IMR-90 (cell line): ENCODE measurements at regions of chr14 and their contacts with region 1.

Region 1: GRCh38 chr14:68248481-68249255 is 429.1 kb downstream of the RAD51B start:
- DNase-seq: peak; percentile 78
- ATAC-seq: peak; percentile 59
- H3K4me3 ChIP-seq: no peak overlapping the region
- H3K27ac ChIP-seq: peak overlapping the region; percentile 28; the same call in 1 of the 2 replicates
- H3K4me1 ChIP-seq: peaks cover 25% of the 10 kb centered on the region
- H3K27me3 ChIP-seq: no peaks in the 10 kb centered on the region
- CTCF ChIP-seq: peak; percentile 66
- POLR2A ChIP-seq: no peak
- RAD21 ChIP-seq: peak; percentile 89

Region 2: DNA sequence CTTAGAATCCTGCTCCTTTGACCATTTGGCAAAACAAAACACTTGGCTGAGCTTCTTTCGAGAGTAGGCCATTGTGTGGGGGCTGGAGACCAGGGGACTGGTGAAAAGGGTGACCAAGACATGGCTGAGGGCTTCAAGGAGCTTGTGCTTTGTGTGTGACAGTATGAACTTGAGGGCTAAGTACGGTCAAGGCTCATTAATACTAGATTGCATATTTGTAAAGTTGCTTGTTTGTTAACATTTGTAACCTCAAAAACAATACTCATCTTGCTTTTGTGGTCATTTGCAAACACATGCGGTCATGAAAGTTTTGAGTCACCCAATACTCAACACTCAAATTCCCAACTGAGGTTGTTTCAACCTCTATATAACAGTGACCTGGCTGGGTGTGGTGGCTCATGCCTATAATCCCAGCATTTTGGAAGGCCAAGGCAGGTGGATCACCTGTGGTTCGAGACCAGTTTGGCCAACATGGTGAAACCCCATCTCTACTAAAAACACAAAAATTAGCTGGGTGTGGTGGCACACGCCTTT is 474.8 kb before region 1 on chr14:
- CTCF ChIA-PET with region 1: no interaction called
- POLR2A ChIA-PET with region 1: no interaction called
- dilution Hi-C with region 1: no loop called
- in situ Hi-C with region 1: no loop called
- intact Hi-C with region 1: no loop called
- DNase-seq: no peak
- ATAC-seq: no peak
- H3K4me3 ChIP-seq: no peak overlapping the region
- H3K27ac ChIP-seq: no peak overlapping the region
- H3K4me1 ChIP-seq: no peaks in the 10 kb centered on the region
- H3K27me3 ChIP-seq: no peaks in the 10 kb centered on the region
- CTCF ChIP-seq: no peak
- POLR2A ChIP-seq: no peak
- RAD21 ChIP-seq: no peak

Region 3: GRCh38 chr14:68084256-68084655 is 164.4 kb before region 1 on chr14:
- CTCF ChIA-PET with region 1: no interaction called
- POLR2A ChIA-PET with region 1: no interaction called
- dilution Hi-C with region 1: no loop called
- in situ Hi-C with region 1: no loop called
- intact Hi-C with region 1: loop called (anchors 5 kb)
- DNase-seq: peak; percentile 45
- ATAC-seq: peak; percentile 48
- H3K4me3 ChIP-seq: no peak overlapping the region
- H3K27ac ChIP-seq: no peak overlapping the region
- H3K4me1 ChIP-seq: peaks cover 8% of the 10 kb centered on the region
- H3K27me3 ChIP-seq: no peaks in the 10 kb centered on the region
- CTCF ChIP-seq: peak; percentile 42
- POLR2A ChIP-seq: no peak
- RAD21 ChIP-seq: peak; percentile 65

Region 4: GRCh38 chr14:68458840-68459469 is 210.3 kb after region 1 on chr14:
- CTCF ChIA-PET with region 1: no interaction called
- POLR2A ChIA-PET with region 1: no interaction called
- dilution Hi-C with region 1: no loop called
- in situ Hi-C with region 1: no loop called
- intact Hi-C with region 1: loop called (anchors 5 kb)
- DNase-seq: peak; percentile 87
- ATAC-seq: peak; percentile 62
- H3K4me3 ChIP-seq: no peak overlapping the region
- H3K27ac ChIP-seq: peak overlapping the region; percentile 69; the same call in 1 of the 2 replicates
- H3K4me1 ChIP-seq: peaks cover 11% of the 10 kb centered on the region
- H3K27me3 ChIP-seq: no peaks in the 10 kb centered on the region
- CTCF ChIP-seq: no peak
- POLR2A ChIP-seq: no peak
- RAD21 ChIP-seq: no peak

Region 5: DNA sequence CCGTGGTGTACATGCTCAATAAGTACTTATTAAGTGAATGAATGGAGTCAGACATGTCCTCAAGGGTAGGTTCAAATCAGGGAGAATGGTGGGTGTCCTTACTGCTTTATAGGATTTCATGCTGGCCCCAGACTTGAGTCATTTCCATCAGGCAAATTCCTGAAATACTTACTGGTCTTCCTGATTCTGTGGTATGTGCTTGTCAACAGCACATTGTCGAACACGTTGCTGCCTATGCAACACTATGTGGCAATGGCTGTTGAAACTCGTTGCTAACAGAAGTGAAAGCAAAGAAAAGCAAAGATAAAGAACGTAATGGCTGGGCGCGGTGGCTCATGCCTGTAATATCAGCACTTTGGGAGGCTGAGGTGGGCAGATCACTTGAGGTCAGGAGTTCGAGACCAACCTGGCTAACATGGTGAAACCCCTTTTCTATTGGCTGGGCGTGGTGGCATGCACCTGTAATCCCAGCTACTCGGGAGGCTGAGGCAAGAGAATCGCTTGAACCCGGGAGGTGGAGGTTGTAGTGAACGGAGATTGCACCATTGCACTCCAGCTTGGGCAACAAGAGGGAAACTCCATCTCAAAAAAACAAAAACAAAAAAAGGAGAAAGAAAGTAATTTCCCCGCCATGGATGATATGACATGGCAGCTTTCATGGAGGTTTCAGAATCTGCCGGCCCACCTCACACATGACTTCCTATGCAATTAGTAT is 329.3 kb after region 1 on chr14:
- CTCF ChIA-PET with region 1: no interaction called
- POLR2A ChIA-PET with region 1: no interaction called
- dilution Hi-C with region 1: no loop called
- in situ Hi-C with region 1: loop called (anchors 10 kb)
- intact Hi-C with region 1: no loop called
- DNase-seq: peak; percentile 98
- ATAC-seq: peak; percentile 87
- H3K4me3 ChIP-seq: no peak overlapping the region
- H3K27ac ChIP-seq: peak overlapping the region; percentile 93
- H3K4me1 ChIP-seq: peaks cover 37% of the 10 kb centered on the region
- H3K27me3 ChIP-seq: no peaks in the 10 kb centered on the region
- CTCF ChIP-seq: 0 out of 2 replicates have a peak, but pooled peaks have one; percentile 1
- POLR2A ChIP-seq: no peak
- RAD21 ChIP-seq: peak; percentile 21; the same call in 1 of the 2 replicates

Region 6: GRCh38 chr14:68663385-68664076 is 414.9 kb after region 1 on chr14:
- CTCF ChIA-PET with region 1: interaction called, 5 read pairs
- POLR2A ChIA-PET with region 1: no interaction called
- dilution Hi-C with region 1: no loop called
- in situ Hi-C with region 1: no loop called
- intact Hi-C with region 1: loop called (anchors 5 kb)
- DNase-seq: peak; percentile 91
- ATAC-seq: peak; percentile 38
- H3K4me3 ChIP-seq: peak overlapping the region; percentile 6; the same call in 1 of the 2 replicates
- H3K27ac ChIP-seq: peak overlapping the region; percentile 35; the same call in 1 of the 2 replicates
- H3K4me1 ChIP-seq: peaks cover 40% of the 10 kb centered on the region
- H3K27me3 ChIP-seq: no peaks in the 10 kb centered on the region
- CTCF ChIP-seq: no peak
- POLR2A ChIP-seq: no peak
- RAD21 ChIP-seq: peak; percentile 30

Region 7: GRCh38 chr14:68816262-68816942 is 567.7 kb after region 1 on chr14:
- CTCF ChIA-PET with region 1: interaction called, 4 read pairs
- POLR2A ChIA-PET with region 1: interaction called, 4 read pairs
- dilution Hi-C with region 1: no loop called
- in situ Hi-C with region 1: loop called (anchors 5 kb)
- intact Hi-C with region 1: loop called (anchors 1 kb)
- DNase-seq: peak; percentile 86
- ATAC-seq: peak; percentile 86
- H3K4me3 ChIP-seq: peak overlapping the region; percentile 38
- H3K27ac ChIP-seq: peak overlapping the region; percentile 92
- H3K4me1 ChIP-seq: peaks cover 24% of the 10 kb centered on the region
- H3K27me3 ChIP-seq: no peaks in the 10 kb centered on the region
- CTCF ChIP-seq: peak; percentile 97
- POLR2A ChIP-seq: 0 out of 2 replicates have a peak, but pooled peaks have one; percentile 16
- RAD21 ChIP-seq: peak; percentile 98